Activated B cell treated with CpG ODN at 0.5 μM for 24 hours (primary cell): ENCODE measurements at regions of chr7 and their contacts with region 1.

Region 1: GRCh38 chr7:101165075-101165957 is at the start of gene VGF:
- DNase-seq: peak; percentile 92
- ATAC-seq: peak; percentile 80
- H3K4me3 Mint-ChIP-seq: peak within 1 kb of the TSS; percentile 82
- H3K27ac Mint-ChIP-seq: peak within 1 kb of the TSS; percentile 53
- H3K4me1 Mint-ChIP-seq: peaks cover 46% of the 10 kb centered on the region
- H3K27me3 Mint-ChIP-seq: peaks cover 42% of the 10 kb centered on the region
- CTCF ChIP-seq: no peak
- total RNA-seq, gene VGF: 0.07 and 0.11 TPM in 2 replicates

Region 2: GRCh38 chr7:100803398-100804233 is 361.7 kb before region 1 on chr7:
- CTCF ChIA-PET with region 1: no interaction called
- POLR2A ChIA-PET with region 1: no interaction called
- intact Hi-C with region 1: no loop called
- DNase-seq: peak; percentile 62
- ATAC-seq: peak; percentile 97
- H3K4me3 Mint-ChIP-seq: peak overlapping the region; percentile 76
- H3K27ac Mint-ChIP-seq: peak overlapping the region; percentile 84
- H3K4me1 Mint-ChIP-seq: peaks cover 36% of the 10 kb centered on the region
- H3K27me3 Mint-ChIP-seq: no peaks in the 10 kb centered on the region
- CTCF ChIP-seq: no peak

Region 3: GRCh38 chr7:101153969-101154692 is 11.2 kb before region 1 on chr7 and contains the start of gene AP1S1:
- CTCF ChIA-PET with region 1: no interaction called
- POLR2A ChIA-PET with region 1: interaction called, 5 read pairs
- intact Hi-C with region 1: loop called (anchors 1 kb)
- DNase-seq: peak; percentile 83
- ATAC-seq: peak; percentile 94
- H3K4me3 Mint-ChIP-seq: peak within 1 kb of the TSS; percentile 83
- H3K27ac Mint-ChIP-seq: peak within 1 kb of the TSS; percentile 74
- H3K4me1 Mint-ChIP-seq: peaks cover 13% of the 10 kb centered on the region
- H3K27me3 Mint-ChIP-seq: peaks cover 6% of the 10 kb centered on the region
- CTCF ChIP-seq: no peak
- total RNA-seq, gene AP1S1: 19.2 and 22.7 TPM in 2 replicates

Region 4: DNA sequence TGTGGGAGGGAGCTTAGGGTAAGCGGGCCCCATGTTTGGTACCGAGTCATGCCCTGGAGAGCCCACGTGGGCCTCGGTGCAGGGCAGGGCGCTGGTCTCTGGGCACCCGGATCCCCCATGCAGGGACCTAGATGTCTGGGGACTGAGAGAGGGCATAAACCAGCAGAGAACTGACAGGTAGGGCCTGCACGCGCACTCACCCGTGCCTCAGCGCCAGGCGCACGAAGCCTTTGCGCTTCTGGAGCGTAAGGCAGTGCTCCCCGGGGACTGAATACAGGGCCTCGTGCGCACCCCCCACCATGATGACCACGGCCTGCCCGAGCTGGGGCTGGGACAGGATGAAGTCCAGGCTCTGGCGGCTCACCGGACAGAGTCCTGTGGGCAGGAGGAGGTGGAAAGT is 32.7 kb after region 1 on chr7:
- CTCF ChIA-PET with region 1: interaction called, 11 read pairs
- POLR2A ChIA-PET with region 1: no interaction called
- intact Hi-C with region 1: no loop called
- DNase-seq: no peak
- ATAC-seq: no peak
- H3K4me3 Mint-ChIP-seq: no peak overlapping the region
- H3K27ac Mint-ChIP-seq: no peak overlapping the region
- H3K4me1 Mint-ChIP-seq: peaks cover 11% of the 10 kb centered on the region
- H3K27me3 Mint-ChIP-seq: peaks cover 19% of the 10 kb centered on the region
- CTCF ChIP-seq: no peak